Thyroid gland (tissue), 4 donors: ENCODE measurements at regions of chr3 and their contacts with region 1.

Region 1: DNA sequence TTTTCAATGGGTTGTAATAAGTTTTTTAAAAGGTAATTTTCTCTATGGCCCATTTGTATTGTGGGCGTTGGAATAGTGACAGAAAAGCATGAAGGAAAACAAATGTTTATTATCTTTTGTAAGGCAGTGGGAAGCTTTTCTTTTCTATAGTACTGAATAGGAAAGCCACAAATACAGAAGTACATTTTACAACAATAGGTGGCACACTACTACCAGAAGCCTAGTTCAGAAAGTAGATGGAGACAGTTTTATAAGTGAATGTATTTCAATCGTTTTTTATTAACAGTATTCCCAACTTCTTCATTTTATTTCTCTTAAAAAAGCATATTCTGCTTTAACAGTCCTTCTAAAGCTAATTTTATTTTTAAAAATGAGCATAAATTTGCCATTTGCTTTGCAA is 296.7 kb downstream of the PTPRG start:
- DNase-seq: no peak
- H3K4me3 ChIP-seq: no peak overlapping the region
- H3K27ac ChIP-seq: no peak overlapping the region
- H3K4me1 ChIP-seq: peaks cover 0 to 14% of the 10 kb centered on the region in 2 donors
- H3K27me3 ChIP-seq: no peaks in the 10 kb centered on the region
- CTCF ChIP-seq: peak in 3 of 6 experiments; percentile 49 to 59 (median 53)
- POLR2A ChIP-seq: no peak

Region 2: DNA sequence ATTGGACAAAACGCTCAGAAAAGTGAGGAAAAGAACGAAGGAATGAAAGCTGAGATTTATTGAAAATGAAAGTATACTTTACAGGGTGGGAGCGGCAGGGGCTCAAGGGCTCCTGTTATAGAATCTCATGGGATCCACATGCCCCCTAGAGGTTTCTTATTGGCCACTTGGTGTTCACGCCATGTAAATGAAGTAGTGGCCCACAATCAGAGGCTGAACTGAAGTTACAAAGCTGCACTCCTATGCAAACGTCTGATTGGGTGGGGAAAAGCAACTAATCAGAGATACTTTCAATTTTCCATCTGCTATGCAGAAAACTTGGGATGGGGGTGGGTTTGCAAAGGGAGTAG is 79.9 kb before region 1 on chr3:
- intact Hi-C with region 1: no loop called
- DNase-seq: no peak
- H3K4me3 ChIP-seq: no peak overlapping the region
- H3K27ac ChIP-seq: no peak overlapping the region
- H3K4me1 ChIP-seq: peaks cover 10 to 13% of the 10 kb centered on the region in 2 donors
- H3K27me3 ChIP-seq: no peaks in the 10 kb centered on the region
- CTCF ChIP-seq: no peak
- POLR2A ChIP-seq: no peak

Region 3: DNA sequence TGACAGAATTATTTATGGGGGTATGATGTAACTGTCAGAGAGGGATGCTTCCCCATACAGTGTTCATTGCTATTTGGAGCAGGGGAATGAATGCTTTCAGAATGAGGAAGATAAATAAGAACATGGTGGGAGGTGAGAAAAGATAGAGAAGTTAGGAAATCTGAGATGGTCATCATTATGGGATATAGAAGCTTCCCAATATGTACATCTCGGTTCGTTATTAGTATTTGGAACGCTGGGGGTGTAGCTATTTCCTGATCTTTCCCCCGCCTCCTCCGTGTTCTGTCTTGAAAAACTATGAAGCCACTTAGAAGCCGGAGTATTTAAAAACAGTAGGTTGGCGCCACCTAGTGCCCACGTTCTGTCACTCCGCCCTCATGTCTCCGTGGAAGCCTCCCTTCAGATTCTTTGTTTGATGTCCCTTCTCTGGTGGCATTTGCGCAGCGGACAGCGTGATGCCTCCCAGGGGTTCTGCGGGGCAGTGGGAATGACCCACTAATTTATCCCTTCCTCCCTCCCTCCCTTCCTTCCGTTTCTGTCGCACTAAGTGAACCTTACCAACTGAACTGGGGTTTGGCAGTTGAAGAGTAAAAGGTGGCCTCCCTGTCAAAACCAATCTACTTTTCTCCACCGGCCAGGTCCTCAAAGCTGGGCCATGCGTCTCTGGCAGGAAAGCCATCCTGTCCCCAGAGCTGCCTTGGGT is 330.8 kb after region 1 on chr3:
- intact Hi-C with region 1: loop called (anchors 5 kb)
- DNase-seq: peak; percentile 74 to 76
- H3K4me3 ChIP-seq: no peak overlapping the region
- H3K27ac ChIP-seq: no peak overlapping the region
- H3K4me1 ChIP-seq: peaks cover 0 to 9% of the 10 kb centered on the region in 2 donors
- H3K27me3 ChIP-seq: no peaks in the 10 kb centered on the region
- CTCF ChIP-seq: peak; percentile 17 to 86 (median 76)
- POLR2A ChIP-seq: no peak